ENCODE measurements at regions of chr7 and their contacts with region 1.

Region 1: GRCh38 chr7:95871078-95871782 is 98.9 kb downstream of the DYNC1I1 start:
- DNase-seq: peak; percentile 16
- H3K4me3 ChIP-seq: no peak overlapping the region
- H3K27ac ChIP-seq: no peak overlapping the region
- H3K4me1 ChIP-seq: no peaks in the 10 kb centered on the region
- H3K27me3 ChIP-seq: no peaks in the 10 kb centered on the region
- CTCF ChIP-seq: peak in 3 of 4 experiments; percentile 56 to 61 (median 58)
- POLR2A ChIP-seq: no peak

Region 2: GRCh38 chr7:95511716-95512260 is 359.4 kb before region 1 on chr7:
- intact Hi-C with region 1: loop called (anchors 10 kb)
- DNase-seq: peak; percentile 56
- H3K4me3 ChIP-seq: no peak overlapping the region
- H3K27ac ChIP-seq: no peak overlapping the region
- H3K4me1 ChIP-seq: no peaks in the 10 kb centered on the region
- H3K27me3 ChIP-seq: no peaks in the 10 kb centered on the region
- CTCF ChIP-seq: peak; percentile 59 to 78 (median 75)
- POLR2A ChIP-seq: no peak

Region 3: DNA sequence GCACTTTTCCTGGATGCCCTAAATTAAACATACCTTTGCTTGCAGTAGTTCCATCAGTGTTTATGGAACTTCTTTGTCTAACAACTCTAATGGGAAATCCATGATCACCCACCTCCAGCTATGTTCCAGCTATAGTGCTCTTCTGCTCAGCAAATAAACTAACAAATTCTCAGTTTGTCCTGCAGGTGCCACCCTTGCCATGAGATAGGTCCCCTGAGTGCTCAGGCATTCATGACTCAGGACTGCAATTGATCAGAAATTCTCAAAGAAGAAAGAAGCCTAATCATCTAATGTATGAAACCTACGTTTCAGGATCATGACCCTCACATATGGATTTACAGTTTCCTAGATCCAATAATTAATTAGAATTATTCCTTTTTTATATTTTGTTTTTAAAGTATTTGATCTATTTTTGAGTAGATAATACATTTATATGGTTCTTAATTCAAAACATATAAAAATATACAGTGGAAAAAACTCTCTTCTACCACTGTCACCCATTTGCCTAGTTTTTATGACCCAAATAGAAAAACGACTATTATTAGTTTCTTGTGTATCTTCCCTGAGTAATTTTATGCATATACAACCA is 147.5 kb before region 1 on chr7:
- intact Hi-C with region 1: loop called (anchors 2 kb)
- DNase-seq: peak; percentile 17
- H3K4me3 ChIP-seq: no peak overlapping the region
- H3K27ac ChIP-seq: no peak overlapping the region
- H3K4me1 ChIP-seq: no peaks in the 10 kb centered on the region
- H3K27me3 ChIP-seq: no peaks in the 10 kb centered on the region
- CTCF ChIP-seq: peak; percentile 18 to 53 (median 39)
- POLR2A ChIP-seq: no peak

Measured in prostate gland (tissue), 2 donors.